Activated T-helper 2 cell treated with anti-CD3 and anti-CD28 coated beads, Interferon-gamma antibody, Interleukin-2, Interleukin-4, amounts not matched to agents 10 μg/mL and 5 μg/mL and 100 μg/mL, durations not matched to agents 14 hours and 24 hours and 36 hours (primary cell): ENCODE measurements at regions of chr14 and their contacts with region 1.

Region 1: GRCh38 chr14:30214461-30215090 is 286.9 kb upstream of the PRKD1 start:
- DNase-seq: no peak
- H3K4me3 Mint-ChIP-seq: no peak overlapping the region
- H3K27ac Mint-ChIP-seq: no peak overlapping the region
- H3K4me1 Mint-ChIP-seq: no peaks in the 10 kb centered on the region
- H3K27me3 Mint-ChIP-seq: no peaks in the 10 kb centered on the region

Region 2: DNA sequence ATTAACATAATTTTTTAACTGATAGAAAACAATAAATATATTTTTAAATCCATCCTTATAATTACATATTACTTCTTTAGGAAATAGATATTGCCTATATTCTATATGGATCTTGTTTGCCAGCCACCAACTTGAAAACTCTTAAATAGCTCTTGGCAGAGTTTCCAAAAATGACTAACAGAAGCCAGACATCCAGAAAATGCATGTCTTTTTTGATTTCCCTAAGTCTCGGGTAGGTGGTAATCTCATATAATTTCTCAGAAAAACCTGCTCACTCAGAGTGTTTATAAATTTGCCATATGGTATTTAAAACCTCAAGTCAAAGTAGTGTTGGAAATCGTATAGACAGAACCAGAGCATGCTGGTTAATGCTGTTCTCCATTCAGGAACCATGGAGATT is 1808.4 kb before region 1 on chr14:
- intact Hi-C with region 1: no loop called
- DNase-seq: no peak
- H3K4me3 Mint-ChIP-seq: no peak overlapping the region
- H3K27ac Mint-ChIP-seq: no peak overlapping the region
- H3K4me1 Mint-ChIP-seq: no peaks in the 10 kb centered on the region
- H3K27me3 Mint-ChIP-seq: no peaks in the 10 kb centered on the region

Region 3: GRCh38 chr14:28751467-28752058 is 1463.0 kb before region 1 on chr14:
- intact Hi-C with region 1: loop called (anchors 10 kb)
- DNase-seq: no peak
- H3K4me3 Mint-ChIP-seq: no peak overlapping the region
- H3K27ac Mint-ChIP-seq: no peak overlapping the region
- H3K4me1 Mint-ChIP-seq: no peaks in the 10 kb centered on the region
- H3K27me3 Mint-ChIP-seq: peaks cover 21% of the 10 kb centered on the region

Region 4: DNA sequence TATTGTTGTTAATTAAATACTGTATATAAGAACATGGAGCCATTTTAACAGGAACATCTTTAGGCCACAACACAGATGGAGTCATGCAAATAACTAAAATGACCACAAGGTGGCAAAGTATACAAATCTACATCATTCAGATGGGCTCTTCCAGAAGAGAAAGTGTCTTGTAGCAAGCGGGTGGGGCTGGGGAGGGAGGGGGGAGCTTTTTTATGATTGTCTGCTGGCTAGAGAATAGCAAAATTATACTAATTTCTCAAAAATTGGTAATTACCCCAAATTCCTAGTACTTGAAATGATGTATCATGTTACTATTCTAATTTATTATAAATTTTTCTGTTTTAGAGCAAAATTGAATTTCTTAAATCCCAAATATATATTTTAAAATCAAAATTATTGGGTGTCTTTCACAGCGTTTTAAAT is 665.6 kb before region 1 on chr14:
- intact Hi-C with region 1: loop called (anchors 2 kb)
- DNase-seq: no peak
- H3K4me3 Mint-ChIP-seq: no peak overlapping the region
- H3K27ac Mint-ChIP-seq: no peak overlapping the region
- H3K4me1 Mint-ChIP-seq: no peaks in the 10 kb centered on the region
- H3K27me3 Mint-ChIP-seq: no peaks in the 10 kb centered on the region

Region 5: DNA sequence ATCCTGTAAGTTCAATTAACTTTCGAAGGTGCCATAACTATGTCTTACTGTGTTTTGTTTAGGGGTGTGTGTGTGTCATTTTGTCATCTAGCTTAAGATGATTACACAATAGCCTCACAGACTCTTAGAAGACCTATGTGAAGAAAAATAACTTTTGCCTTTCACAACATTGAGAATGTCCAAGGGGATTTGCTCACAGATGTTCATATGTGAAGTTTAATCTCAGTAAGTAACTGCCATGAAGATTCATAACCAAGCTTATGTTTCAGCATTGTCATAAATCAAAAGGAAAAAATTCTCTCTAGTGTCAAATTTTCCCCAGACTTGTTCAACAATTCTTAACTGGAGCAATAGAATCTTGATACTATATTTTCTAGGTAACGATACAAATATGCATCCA is 60.9 kb before region 1 on chr14:
- intact Hi-C with region 1: no loop called
- DNase-seq: no peak
- H3K4me3 Mint-ChIP-seq: no peak overlapping the region
- H3K27ac Mint-ChIP-seq: no peak overlapping the region
- H3K4me1 Mint-ChIP-seq: no peaks in the 10 kb centered on the region
- H3K27me3 Mint-ChIP-seq: no peaks in the 10 kb centered on the region